ENCODE measurements at regions of chr16 and their contacts with region 1.

Region 1: GRCh38 chr16:85610508-85611332 is 2.4 kb upstream of the GSE1 start:
- DNase-seq: peak; percentile 81
- ATAC-seq: peak; percentile 52
- H3K4me3 ChIP-seq: no peak overlapping the region
- H3K27ac ChIP-seq: no peak overlapping the region; the same call in 1 of the 2 replicates
- H3K4me1 ChIP-seq: peaks cover 18% of the 10 kb centered on the region
- H3K27me3 ChIP-seq: no peaks in the 10 kb centered on the region
- CTCF ChIP-seq: peak; percentile 96
- POLR2A ChIP-seq: peak; percentile 57; the same call in 1 of the 2 replicates
- RAD21 ChIP-seq: peak; percentile 97

Region 2: GRCh38 chr16:85275533-85276249 is 335.0 kb before region 1 on chr16:
- CTCF ChIA-PET with region 1: no interaction called
- POLR2A ChIA-PET with region 1: no interaction called
- dilution Hi-C with region 1: no loop called
- in situ Hi-C with region 1: loop called (anchors 5 kb)
- intact Hi-C with region 1: loop called (anchors 5 kb)
- DNase-seq: peak; percentile 41
- ATAC-seq: peak; percentile 89
- H3K4me3 ChIP-seq: no peak overlapping the region
- H3K27ac ChIP-seq: no peak overlapping the region
- H3K4me1 ChIP-seq: peaks cover 4% of the 10 kb centered on the region; the same call in 1 of the 2 replicates
- H3K27me3 ChIP-seq: no peaks in the 10 kb centered on the region
- CTCF ChIP-seq: peak; percentile 85
- POLR2A ChIP-seq: no peak
- RAD21 ChIP-seq: peak; percentile 90

Region 3: DNA sequence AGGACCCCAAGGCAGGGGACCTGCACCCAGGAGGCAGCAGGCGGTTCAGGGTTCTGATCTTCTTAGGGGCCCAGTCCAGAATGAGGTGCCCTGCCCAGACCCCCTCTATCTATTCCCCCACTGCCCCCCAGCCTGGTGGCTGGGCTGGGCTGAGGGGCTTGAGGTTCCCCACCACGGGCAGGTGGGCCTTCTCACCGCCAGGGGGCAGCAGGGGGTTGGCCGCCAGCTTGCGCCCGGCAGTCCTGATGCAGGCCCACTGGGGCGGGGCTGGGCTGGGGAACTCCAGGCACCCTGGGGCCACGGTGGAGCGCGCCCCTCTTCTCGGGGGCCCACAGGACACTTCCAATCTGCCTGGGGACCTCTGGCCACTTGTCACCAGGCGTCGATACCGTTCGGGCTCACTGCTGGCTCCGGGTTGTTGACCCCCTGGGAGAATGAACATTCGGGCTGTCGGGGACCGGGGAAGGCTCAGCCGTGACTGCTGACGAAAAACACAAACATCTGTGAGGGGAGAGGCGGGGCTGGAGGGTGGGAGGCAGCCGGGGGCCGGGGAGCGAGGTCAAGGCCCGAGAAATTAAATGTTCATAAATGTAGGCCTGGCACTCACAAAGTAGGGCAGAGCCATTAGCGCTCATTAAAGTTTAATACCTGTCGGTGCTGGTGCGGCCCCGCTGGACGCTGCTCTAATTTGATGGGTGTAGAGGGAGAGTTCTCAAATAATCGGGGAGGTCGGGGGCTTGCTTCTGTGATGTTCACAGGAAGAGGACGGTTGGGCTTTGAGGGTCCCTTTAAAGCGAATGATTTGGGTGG is 216.8 kb before region 1 on chr16:
- CTCF ChIA-PET with region 1: interaction called, 4 read pairs
- POLR2A ChIA-PET with region 1: no interaction called
- dilution Hi-C with region 1: no loop called
- in situ Hi-C with region 1: no loop called
- intact Hi-C with region 1: loop called (anchors 1 kb)
- DNase-seq: peak; percentile 40
- ATAC-seq: no peak
- H3K4me3 ChIP-seq: no peak overlapping the region
- H3K27ac ChIP-seq: no peak overlapping the region
- H3K4me1 ChIP-seq: peaks cover 38% of the 10 kb centered on the region
- H3K27me3 ChIP-seq: no peaks in the 10 kb centered on the region
- CTCF ChIP-seq: peak; percentile 74
- POLR2A ChIP-seq: no peak
- RAD21 ChIP-seq: peak; percentile 61

Region 4: GRCh38 chr16:85461814-85462713 is 148.7 kb before region 1 on chr16:
- CTCF ChIA-PET with region 1: no interaction called
- POLR2A ChIA-PET with region 1: no interaction called
- dilution Hi-C with region 1: no loop called
- in situ Hi-C with region 1: no loop called
- intact Hi-C with region 1: no loop called
- DNase-seq: peak; percentile 50
- ATAC-seq: peak; percentile 40
- H3K4me3 ChIP-seq: no peak overlapping the region
- H3K27ac ChIP-seq: no peak overlapping the region
- H3K4me1 ChIP-seq: peaks cover 35% of the 10 kb centered on the region
- H3K27me3 ChIP-seq: no peaks in the 10 kb centered on the region
- CTCF ChIP-seq: no peak
- POLR2A ChIP-seq: no peak
- RAD21 ChIP-seq: no peak

Region 5: DNA sequence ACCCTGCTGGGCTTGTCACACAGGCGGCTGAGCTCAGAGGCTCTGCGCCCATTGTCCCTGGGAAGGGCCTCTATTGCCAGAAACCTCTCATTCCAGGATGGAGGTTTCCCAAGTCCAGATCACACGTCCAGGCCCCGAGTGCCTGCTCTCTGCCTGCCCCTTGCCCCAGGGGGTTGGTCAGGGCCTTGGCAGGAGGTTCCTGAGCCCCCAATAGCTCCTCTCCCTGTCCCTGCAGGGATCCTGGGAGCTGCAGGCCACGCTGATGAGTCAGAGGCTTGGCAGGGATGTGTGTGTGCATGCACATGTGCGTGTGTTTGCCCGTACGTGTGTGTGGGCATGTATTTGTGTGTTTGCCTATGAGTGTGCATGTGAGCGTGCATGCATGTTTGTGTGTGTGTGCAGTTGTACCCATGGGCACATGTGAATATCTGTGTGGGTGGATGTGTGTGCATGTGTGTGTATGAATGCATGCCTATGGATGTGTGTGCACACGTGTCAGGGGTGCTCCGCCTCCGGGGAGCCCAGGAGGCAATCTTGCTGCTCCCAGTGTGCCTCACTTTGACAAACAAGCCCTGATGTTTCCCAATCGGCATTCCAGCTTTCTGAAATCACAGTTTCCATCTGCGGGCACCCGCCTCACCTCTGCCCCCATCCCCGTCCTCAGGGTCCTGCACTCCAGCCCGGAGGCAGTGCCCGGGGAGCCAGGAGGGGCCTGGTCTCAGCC is 96.0 kb before region 1 on chr16:
- CTCF ChIA-PET with region 1: no interaction called
- POLR2A ChIA-PET with region 1: no interaction called
- dilution Hi-C with region 1: no loop called
- in situ Hi-C with region 1: no loop called
- intact Hi-C with region 1: loop called (anchors 1 kb)
- DNase-seq: peak; percentile 92
- ATAC-seq: peak; percentile 79
- H3K4me3 ChIP-seq: no peak overlapping the region
- H3K27ac ChIP-seq: peak overlapping the region; percentile 88
- H3K4me1 ChIP-seq: peaks cover 36% of the 10 kb centered on the region
- H3K27me3 ChIP-seq: no peaks in the 10 kb centered on the region
- CTCF ChIP-seq: no peak
- POLR2A ChIP-seq: no peak
- RAD21 ChIP-seq: no peak

Region 6: GRCh38 chr16:85528528-85529387 is 82.0 kb before region 1 on chr16:
- CTCF ChIA-PET with region 1: no interaction called
- POLR2A ChIA-PET with region 1: no interaction called
- dilution Hi-C with region 1: no loop called
- in situ Hi-C with region 1: no loop called
- intact Hi-C with region 1: no loop called
- DNase-seq: no peak
- ATAC-seq: no peak
- H3K4me3 ChIP-seq: no peak overlapping the region
- H3K27ac ChIP-seq: no peak overlapping the region
- H3K4me1 ChIP-seq: peaks cover 14% of the 10 kb centered on the region
- H3K27me3 ChIP-seq: no peaks in the 10 kb centered on the region
- CTCF ChIP-seq: peak; percentile 36
- POLR2A ChIP-seq: no peak
- RAD21 ChIP-seq: no peak

Region 7: GRCh38 chr16:86010680-86011141 is 400.0 kb after region 1 on chr16:
- CTCF ChIA-PET with region 1: no interaction called
- POLR2A ChIA-PET with region 1: no interaction called
- dilution Hi-C with region 1: no loop called
- in situ Hi-C with region 1: no loop called
- intact Hi-C with region 1: no loop called
- DNase-seq: no peak
- ATAC-seq: no peak
- H3K4me3 ChIP-seq: no peak overlapping the region
- H3K27ac ChIP-seq: no peak overlapping the region
- H3K4me1 ChIP-seq: no peaks in the 10 kb centered on the region
- H3K27me3 ChIP-seq: peaks cover 32% of the 10 kb centered on the region
- CTCF ChIP-seq: no peak
- POLR2A ChIP-seq: no peak
- RAD21 ChIP-seq: no peak

Measured in IMR-90 (cell line).